ENCODE measurements at regions of chr1 and their contacts with region 1.

Region 1: GRCh38 chr1:110106013-110106941 is 6.0 kb upstream of the UBL4B start:
- DNase-seq: peak; percentile 66 to 84 (median 82)
- ATAC-seq: peak; percentile 81 to 86
- H3K4me3 ChIP-seq: no peak overlapping the region
- H3K27ac ChIP-seq: no peak overlapping the region
- H3K4me1 ChIP-seq: no peaks in the 10 kb centered on the region
- H3K27me3 ChIP-seq: no peaks in the 10 kb centered on the region

Region 2: DNA sequence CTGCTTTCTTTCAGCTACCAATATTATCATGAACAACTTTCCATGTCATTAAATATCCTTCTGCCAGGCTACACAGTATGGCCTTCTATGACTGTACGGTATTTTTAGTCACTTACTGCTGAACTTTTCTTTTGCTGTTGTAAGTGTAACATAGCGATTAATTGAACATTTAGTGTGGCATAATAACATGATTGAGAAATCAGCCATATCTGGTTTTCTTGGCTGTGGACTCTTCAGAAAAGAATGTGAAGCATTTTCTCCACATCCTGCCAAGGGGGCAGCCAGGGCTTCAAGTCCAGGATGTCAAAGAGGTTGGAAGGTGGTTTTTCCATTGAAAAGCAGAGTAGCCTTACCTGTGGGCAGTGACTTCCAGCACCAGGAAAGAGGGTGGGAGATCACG is 130.6 kb before region 1 on chr1:
- intact Hi-C with region 1: no loop called
- DNase-seq: no peak
- ATAC-seq: no peak
- H3K4me3 ChIP-seq: no peak overlapping the region
- H3K27ac ChIP-seq: no peak overlapping the region
- H3K4me1 ChIP-seq: peaks cover 7% of the 10 kb centered on the region
- H3K27me3 ChIP-seq: no peaks in the 10 kb centered on the region

Region 3: DNA sequence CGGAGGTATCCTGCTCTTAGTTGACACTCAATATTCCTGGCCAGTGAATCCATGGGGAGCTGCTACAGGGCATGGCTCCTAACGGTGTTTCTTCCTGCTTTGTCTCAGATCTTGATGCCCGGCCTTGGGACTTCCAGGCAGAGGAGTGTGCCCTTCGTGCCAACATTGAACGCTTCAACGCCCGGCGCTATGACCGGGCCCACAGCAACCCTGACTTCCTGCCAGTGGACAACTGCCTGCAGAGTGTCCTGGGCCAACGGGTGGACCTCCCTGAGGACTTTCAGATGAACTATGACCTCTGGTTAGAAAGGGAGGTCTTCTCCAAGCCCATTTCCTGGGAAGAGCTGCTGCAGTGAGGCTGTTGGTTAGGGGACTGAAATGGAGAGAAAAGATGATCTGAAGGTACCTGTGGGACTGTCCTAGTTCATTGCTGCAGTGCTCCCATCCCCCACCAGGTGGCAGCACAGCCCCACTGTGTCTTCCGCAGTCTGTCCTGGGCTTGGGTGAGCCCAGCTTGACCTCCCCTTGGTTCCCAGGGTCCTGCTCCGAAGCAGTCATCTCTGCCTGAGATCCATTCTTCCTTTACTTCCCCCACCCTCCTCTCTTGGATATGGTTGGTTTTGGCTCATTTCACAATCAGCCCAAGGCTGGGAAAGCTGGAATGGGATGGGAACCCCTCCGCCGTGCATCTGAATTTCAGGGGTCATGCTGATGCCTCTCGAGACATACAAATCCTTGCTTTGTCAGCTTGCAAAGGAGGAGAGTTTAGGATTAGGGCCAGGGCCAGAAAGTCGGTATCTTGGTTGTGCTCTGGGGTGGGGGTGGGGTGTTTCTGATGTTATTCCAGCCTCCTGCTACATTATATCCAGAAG is 52.5 kb before region 1 on chr1:
- intact Hi-C with region 1: loop called (anchors 5 to 10 kb)
- DNase-seq: peak; percentile 70 to 89 (median 87)
- ATAC-seq: peak; percentile 57 to 70
- H3K4me3 ChIP-seq: no peak overlapping the region
- H3K27ac ChIP-seq: no peak overlapping the region
- H3K4me1 ChIP-seq: peaks cover 5% of the 10 kb centered on the region
- H3K27me3 ChIP-seq: no peaks in the 10 kb centered on the region

Region 4: GRCh38 chr1:110155878-110156522 is 49.7 kb after region 1 on chr1:
- intact Hi-C with region 1: no loop called
- DNase-seq: peak; percentile 46 to 85 (median 85)
- ATAC-seq: peak; percentile 65 to 71
- H3K4me3 ChIP-seq: no peak overlapping the region
- H3K27ac ChIP-seq: no peak overlapping the region
- H3K4me1 ChIP-seq: no peaks in the 10 kb centered on the region
- H3K27me3 ChIP-seq: no peaks in the 10 kb centered on the region

Region 5: GRCh38 chr1:110254996-110255787 is 148.9 kb after region 1 on chr1:
- intact Hi-C with region 1: no loop called
- DNase-seq: no peak
- ATAC-seq: no peak
- H3K4me3 ChIP-seq: no peak overlapping the region
- H3K27ac ChIP-seq: no peak overlapping the region
- H3K4me1 ChIP-seq: peaks cover 3% of the 10 kb centered on the region
- H3K27me3 ChIP-seq: no peaks in the 10 kb centered on the region

Measured in right cardiac atrium (tissue), 5 donors.